ENCODE measurements at regions of chr20 and their contacts with region 1.

Region 1: GRCh38 chr20:40962730-40963504 is 65.7 kb upstream of the TOP1 start:
- DNase-seq: peak; percentile 80
- ATAC-seq: peak; percentile 70
- H3K4me3 ChIP-seq: no peak overlapping the region
- H3K4me3 Mint-ChIP-seq: no peak overlapping the region
- H3K27ac ChIP-seq: no peak overlapping the region
- H3K27ac Mint-ChIP-seq: no peak overlapping the region
- H3K4me1 ChIP-seq: peaks cover 0 to 5% of the 10 kb centered on the region in 2 donors
- H3K4me1 Mint-ChIP-seq: peaks cover 3% of the 10 kb centered on the region
- H3K27me3 ChIP-seq: peaks cover 0 to 4% (median 0%) of the 10 kb centered on the region in 4 experiments
- H3K27me3 Mint-ChIP-seq: peaks cover 3% of the 10 kb centered on the region
- CTCF ChIP-seq: peak; percentile 90

Region 2: GRCh38 chr20:39264506-39265172 is 1698.3 kb before region 1 on chr20:
- CTCF ChIA-PET with region 1: interaction called, 23 read pairs
- POLR2A ChIA-PET with region 1: no interaction called
- intact Hi-C with region 1: no loop called
- DNase-seq: peak; percentile 46
- ATAC-seq: no peak
- H3K4me3 ChIP-seq: no peak overlapping the region
- H3K4me3 Mint-ChIP-seq: no peak overlapping the region
- H3K27ac ChIP-seq: no peak overlapping the region
- H3K27ac Mint-ChIP-seq: no peak overlapping the region
- H3K4me1 ChIP-seq: no peaks in the 10 kb centered on the region
- H3K4me1 Mint-ChIP-seq: no peaks in the 10 kb centered on the region
- H3K27me3 ChIP-seq: no peaks in the 10 kb centered on the region
- H3K27me3 Mint-ChIP-seq: peaks cover 15% of the 10 kb centered on the region
- CTCF ChIP-seq: peak; percentile 91

Region 3: GRCh38 chr20:40786336-40786735 is 176.6 kb before region 1 on chr20:
- CTCF ChIA-PET with region 1: no interaction called
- POLR2A ChIA-PET with region 1: no interaction called
- intact Hi-C with region 1: no loop called
- DNase-seq: no peak
- ATAC-seq: no peak
- H3K4me3 ChIP-seq: no peak overlapping the region
- H3K4me3 Mint-ChIP-seq: no peak overlapping the region
- H3K27ac ChIP-seq: no peak overlapping the region
- H3K27ac Mint-ChIP-seq: no peak overlapping the region
- H3K4me1 ChIP-seq: no peaks in the 10 kb centered on the region
- H3K4me1 Mint-ChIP-seq: no peaks in the 10 kb centered on the region
- H3K27me3 ChIP-seq: no peaks in the 10 kb centered on the region
- H3K27me3 Mint-ChIP-seq: peaks cover 24% of the 10 kb centered on the region
- CTCF ChIP-seq: no peak

Region 4: GRCh38 chr20:40892649-40893048 is 70.3 kb before region 1 on chr20:
- CTCF ChIA-PET with region 1: interaction called, 7 read pairs
- POLR2A ChIA-PET with region 1: no interaction called
- intact Hi-C with region 1: loop called (anchors 2 kb)
- DNase-seq: peak; percentile 13
- ATAC-seq: no peak
- H3K4me3 ChIP-seq: no peak overlapping the region
- H3K4me3 Mint-ChIP-seq: no peak overlapping the region
- H3K27ac ChIP-seq: no peak overlapping the region
- H3K27ac Mint-ChIP-seq: no peak overlapping the region
- H3K4me1 ChIP-seq: no peaks in the 10 kb centered on the region
- H3K4me1 Mint-ChIP-seq: no peaks in the 10 kb centered on the region
- H3K27me3 ChIP-seq: no peaks in the 10 kb centered on the region
- H3K27me3 Mint-ChIP-seq: no peaks in the 10 kb centered on the region
- CTCF ChIP-seq: no peak

Region 5: GRCh38 chr20:41086402-41087338 is 123.8 kb after region 1 on chr20:
- CTCF ChIA-PET with region 1: interaction called, 43 read pairs
- POLR2A ChIA-PET with region 1: interaction called, 5 read pairs
- intact Hi-C with region 1: no loop called
- DNase-seq: no peak
- ATAC-seq: no peak
- H3K4me3 ChIP-seq: no peak overlapping the region
- H3K4me3 Mint-ChIP-seq: no peak overlapping the region
- H3K27ac ChIP-seq: no peak overlapping the region
- H3K27ac Mint-ChIP-seq: peak overlapping the region; percentile 16
- H3K4me1 ChIP-seq: no peaks in the 10 kb centered on the region
- H3K4me1 Mint-ChIP-seq: no peaks in the 10 kb centered on the region
- H3K27me3 ChIP-seq: no peaks in the 10 kb centered on the region
- H3K27me3 Mint-ChIP-seq: no peaks in the 10 kb centered on the region
- CTCF ChIP-seq: no peak

Region 6: DNA sequence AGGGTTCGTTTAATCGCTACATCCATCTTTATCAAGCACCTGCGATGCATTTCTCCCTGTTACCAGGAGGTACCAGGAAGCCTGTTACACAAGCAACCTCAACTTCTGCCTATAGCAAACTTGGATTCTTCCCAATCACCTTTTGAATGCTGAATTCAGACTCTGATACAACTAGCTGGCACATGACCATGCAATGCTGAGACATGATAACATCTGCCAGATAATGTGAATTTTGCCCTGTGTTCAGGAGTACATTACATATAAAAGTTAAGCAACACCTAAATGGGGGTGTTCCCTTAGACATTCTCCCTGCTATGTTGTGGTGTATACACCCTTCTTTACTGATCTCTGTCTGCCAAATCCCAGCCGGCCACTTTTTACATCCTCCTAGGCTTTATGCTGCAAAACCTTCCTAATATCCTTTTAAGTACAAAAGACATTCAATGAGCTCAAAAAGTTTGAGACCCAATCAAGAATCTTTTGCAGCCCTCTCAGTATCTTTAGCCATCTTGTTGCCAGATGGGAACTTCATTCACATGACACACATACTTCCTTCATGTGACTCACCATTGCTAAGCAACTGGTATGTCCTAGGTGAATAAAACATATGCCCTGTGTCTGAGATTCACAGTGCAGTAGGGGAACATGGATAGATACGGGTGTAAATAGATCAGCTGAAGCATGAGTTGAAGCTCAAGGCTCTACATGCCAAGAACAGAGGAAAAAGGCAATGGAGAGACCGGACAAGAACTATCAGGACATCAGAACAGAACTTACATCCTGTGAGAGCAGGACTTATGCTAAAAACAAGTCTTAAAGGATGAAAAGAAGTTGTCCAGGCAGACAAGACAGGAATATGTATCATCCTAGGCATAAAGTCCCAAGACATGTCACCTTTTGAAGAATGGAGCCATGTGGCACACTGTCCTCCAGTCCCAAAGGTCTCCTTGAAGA is 270.3 kb after region 1 on chr20:
- CTCF ChIA-PET with region 1: interaction called, 9 read pairs
- POLR2A ChIA-PET with region 1: no interaction called
- intact Hi-C with region 1: loop called (anchors 5 kb)
- DNase-seq: no peak
- ATAC-seq: peak; percentile 41
- H3K4me3 ChIP-seq: no peak overlapping the region
- H3K4me3 Mint-ChIP-seq: peak overlapping the region; percentile 17
- H3K27ac ChIP-seq: no peak overlapping the region
- H3K27ac Mint-ChIP-seq: peak overlapping the region; percentile 8
- H3K4me1 ChIP-seq: peaks cover 9 to 15% of the 10 kb centered on the region in 2 donors
- H3K4me1 Mint-ChIP-seq: peaks cover 26% of the 10 kb centered on the region
- H3K27me3 ChIP-seq: no peaks in the 10 kb centered on the region
- H3K27me3 Mint-ChIP-seq: no peaks in the 10 kb centered on the region
- CTCF ChIP-seq: no peak

Measured in B cell (primary cell).